Naive thymus-derived CD4-positive, alpha-beta T cell (primary cell): ENCODE measurements at regions of chr17 and their contacts with region 1.

Region 1: DNA sequence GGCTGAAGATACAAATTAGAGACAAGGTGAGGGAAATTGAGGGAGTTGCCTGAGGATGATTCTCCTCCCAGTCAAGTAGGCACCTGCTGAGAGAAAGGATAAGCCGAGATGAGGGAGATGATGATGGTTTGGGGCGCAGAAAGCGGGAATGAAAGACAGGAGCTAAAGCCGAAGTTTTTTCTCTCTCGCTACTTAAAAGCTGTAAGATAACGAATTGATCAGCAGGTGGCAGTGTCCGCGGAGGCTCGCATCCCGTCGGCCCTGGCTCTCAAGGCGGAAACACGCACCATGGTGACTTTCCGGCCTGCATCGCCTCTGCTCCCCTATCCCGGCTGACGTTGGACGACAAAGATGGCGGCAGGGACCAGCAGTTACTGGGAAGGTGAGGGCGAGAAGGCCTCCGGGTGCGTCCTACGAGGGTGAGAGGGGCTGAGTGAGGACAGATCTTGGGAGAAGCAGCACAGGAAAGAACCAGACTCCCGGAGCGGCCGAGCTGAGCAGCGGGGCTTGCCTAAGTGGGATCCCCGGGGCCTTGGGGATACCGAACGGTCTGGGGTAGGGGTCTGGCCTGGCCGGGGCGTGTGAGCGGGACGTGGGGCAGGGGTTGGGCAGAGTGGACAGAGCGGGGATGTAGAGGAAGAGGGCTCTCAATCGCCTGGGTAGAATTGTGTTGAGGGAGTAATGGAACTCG is at the start of gene GOSR1:
- DNase-seq: peak; percentile 78 to 92 (median 90)
- ATAC-seq: peak; percentile 99
- H3K4me3 ChIP-seq: peak within 1 kb of the TSS; percentile 82
- H3K4me3 Mint-ChIP-seq: peak within 1 kb of the TSS; percentile 92 to 99 (median 97)
- H3K27ac ChIP-seq: peak within 1 kb of the TSS; percentile 100
- H3K27ac Mint-ChIP-seq: peak within 1 kb of the TSS; percentile 94 to 99 (median 99)
- H3K4me1 ChIP-seq: peaks cover 11 to 13% of the 10 kb centered on the region in 2 donors
- H3K4me1 Mint-ChIP-seq: peaks cover 18 to 59% (median 47%) of the 10 kb centered on the region in 7 donors
- H3K27me3 ChIP-seq: no peaks in the 10 kb centered on the region
- H3K27me3 Mint-ChIP-seq: peaks cover 0 to 7% (median 2%) of the 10 kb centered on the region in 5 donors
- total RNA-seq, gene GOSR1: 45.1 to 70.8 (median 62.9) TPM

Region 2: GRCh38 chr17:30291543-30292285 is 185.5 kb before region 1 on chr17 and contains the start of gene BLMH:
- CTCF ChIA-PET with region 1: no interaction called
- POLR2A ChIA-PET with region 1: no interaction called
- intact Hi-C with region 1: loop called in 1 of 2 experiments (anchors 10 kb)
- DNase-seq: peak; percentile 58 to 89 (median 66)
- ATAC-seq: peak; percentile 90
- H3K4me3 ChIP-seq: peak within 1 kb of the TSS; percentile 77
- H3K4me3 Mint-ChIP-seq: peak within 1 kb of the TSS in 8 of 10 donors; percentile 92 to 97 (median 94)
- H3K27ac ChIP-seq: peak within 1 kb of the TSS; percentile 63
- H3K27ac Mint-ChIP-seq: peak within 1 kb of the TSS; percentile 44 to 91 (median 85)
- H3K4me1 ChIP-seq: peaks cover 9% of the 10 kb centered on the region in 2 donors
- H3K4me1 Mint-ChIP-seq: peaks cover 5 to 22% (median 19%) of the 10 kb centered on the region in 7 donors
- H3K27me3 ChIP-seq: no peaks in the 10 kb centered on the region
- H3K27me3 Mint-ChIP-seq: no peaks in the 10 kb centered on the region
- total RNA-seq, gene BLMH: 26.8 to 57.5 (median 40.1) TPM

Region 3: DNA sequence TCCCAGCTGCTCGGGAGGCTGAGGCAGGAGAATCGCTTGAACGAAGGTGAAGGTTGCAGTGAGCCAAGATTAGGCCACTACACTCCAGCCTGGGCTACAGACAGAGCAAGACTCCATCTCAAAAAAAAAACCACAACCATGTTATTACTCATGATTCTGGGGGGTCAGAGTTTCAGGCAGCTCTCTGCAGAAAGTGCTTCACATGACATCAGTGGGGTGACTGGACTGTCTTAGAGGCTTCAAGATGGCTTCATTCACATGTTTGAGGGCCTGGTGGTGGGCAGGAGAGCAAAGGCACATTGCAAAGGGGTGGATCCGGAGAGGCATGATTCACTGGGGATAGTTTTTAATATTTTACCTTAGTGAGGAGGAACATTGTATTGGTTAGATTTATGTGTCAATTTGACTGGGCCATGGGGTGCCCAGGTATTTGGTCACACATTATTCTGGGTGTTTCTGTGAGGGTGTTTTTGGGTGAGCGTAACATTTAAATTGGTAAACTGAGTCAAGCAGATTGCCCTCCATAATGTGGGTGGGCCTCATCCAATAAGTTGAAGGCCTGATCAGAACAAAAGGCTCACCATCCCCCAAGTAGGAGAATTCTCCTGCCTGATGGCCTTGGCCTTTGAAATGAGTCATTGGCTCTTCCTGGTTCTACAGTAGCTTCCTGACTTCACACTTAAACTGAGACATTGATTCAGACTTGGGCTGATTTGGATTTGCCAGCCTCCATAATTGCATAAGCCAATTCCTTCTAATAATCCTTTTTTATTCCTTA is 109.8 kb after region 1 on chr17:
- CTCF ChIA-PET with region 1: no interaction called
- POLR2A ChIA-PET with region 1: no interaction called
- intact Hi-C with region 1: no loop called
- DNase-seq: no peak
- ATAC-seq: no peak
- H3K4me3 ChIP-seq: no peak overlapping the region
- H3K4me3 Mint-ChIP-seq: no peak overlapping the region
- H3K27ac ChIP-seq: no peak overlapping the region
- H3K27ac Mint-ChIP-seq: no peak overlapping the region
- H3K4me1 ChIP-seq: no peaks in the 10 kb centered on the region
- H3K4me1 Mint-ChIP-seq: peaks cover 0 to 6% (median 0%) of the 10 kb centered on the region in 7 donors
- H3K27me3 ChIP-seq: no peaks in the 10 kb centered on the region
- H3K27me3 Mint-ChIP-seq: peaks cover 0 to 8% (median 2%) of the 10 kb centered on the region in 5 donors

Region 4: GRCh38 chr17:30600049-30600829 is 123.0 kb after region 1 on chr17:
- CTCF ChIA-PET with region 1: no interaction called
- POLR2A ChIA-PET with region 1: no interaction called
- intact Hi-C with region 1: loop called (anchors 5 to 10 kb)
- DNase-seq: peak; percentile 20 to 76 (median 47)
- ATAC-seq: peak; percentile 91
- H3K4me3 ChIP-seq: peak overlapping the region; percentile 79
- H3K4me3 Mint-ChIP-seq: peak overlapping the region; percentile 81 to 97 (median 92)
- H3K27ac ChIP-seq: peak overlapping the region; percentile 61
- H3K27ac Mint-ChIP-seq: peak overlapping the region in 8 of 9 donors; percentile 14 to 91 (median 75)
- H3K4me1 ChIP-seq: peaks cover 0 to 2% of the 10 kb centered on the region in 2 donors
- H3K4me1 Mint-ChIP-seq: peaks cover 5 to 25% (median 22%) of the 10 kb centered on the region in 7 donors
- H3K27me3 ChIP-seq: no peaks in the 10 kb centered on the region
- H3K27me3 Mint-ChIP-seq: peaks cover 0 to 18% (median 0%) of the 10 kb centered on the region in 5 donors

Region 5: DNA sequence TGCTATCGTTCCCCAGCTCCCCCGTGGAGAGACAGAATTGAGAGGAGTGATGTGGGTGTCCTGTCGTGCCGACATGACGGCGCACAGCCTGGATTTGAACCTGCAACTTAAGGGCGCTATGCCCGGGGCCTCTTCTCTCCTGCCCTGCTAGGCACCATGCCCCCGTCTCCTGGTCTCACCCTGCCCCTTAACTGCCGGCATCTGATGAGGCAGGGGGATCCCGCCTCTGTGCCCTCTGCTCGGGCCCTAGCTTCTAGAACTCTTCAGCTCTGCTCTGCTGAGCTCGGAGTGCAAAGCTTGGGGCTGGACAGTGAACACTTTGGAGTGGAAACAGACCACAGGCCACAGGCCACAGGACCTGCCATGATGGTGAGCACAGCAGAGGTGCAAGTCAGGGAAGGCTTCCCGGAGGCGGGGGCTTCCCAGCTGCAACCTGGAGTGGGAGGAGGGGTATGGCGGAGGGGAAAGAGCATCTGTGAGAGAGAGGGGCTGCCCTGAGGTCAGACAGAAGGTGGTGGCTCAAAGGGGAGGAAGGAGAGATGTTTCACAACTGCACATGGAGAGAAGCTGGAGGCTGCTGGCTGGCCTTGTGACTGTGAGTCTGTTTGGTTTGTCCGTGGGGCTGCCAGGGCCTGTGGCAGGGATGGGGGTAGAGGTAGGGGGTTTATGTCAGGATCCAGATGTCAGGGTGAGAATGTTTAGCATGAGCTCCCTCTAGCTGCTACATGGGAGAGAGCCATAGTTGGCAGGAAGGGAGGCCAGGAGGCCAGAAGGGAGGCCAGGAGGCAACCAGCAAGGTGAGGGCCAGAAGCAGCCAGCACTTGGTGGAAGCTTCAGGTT is 239.5 kb after region 1 on chr17:
- CTCF ChIA-PET with region 1: no interaction called
- POLR2A ChIA-PET with region 1: no interaction called
- intact Hi-C with region 1: loop called in 1 of 2 experiments (anchors 5 kb)
- DNase-seq: no peak
- ATAC-seq: no peak
- H3K4me3 ChIP-seq: no peak overlapping the region
- H3K4me3 Mint-ChIP-seq: no peak overlapping the region
- H3K27ac ChIP-seq: no peak overlapping the region
- H3K27ac Mint-ChIP-seq: no peak overlapping the region
- H3K4me1 ChIP-seq: peaks cover 0 to 3% of the 10 kb centered on the region in 2 donors
- H3K4me1 Mint-ChIP-seq: peaks cover 5 to 12% (median 9%) of the 10 kb centered on the region in 7 donors
- H3K27me3 ChIP-seq: no peaks in the 10 kb centered on the region
- H3K27me3 Mint-ChIP-seq: peaks cover 0 to 2% (median 0%) of the 10 kb centered on the region in 5 donors

Region 6: DNA sequence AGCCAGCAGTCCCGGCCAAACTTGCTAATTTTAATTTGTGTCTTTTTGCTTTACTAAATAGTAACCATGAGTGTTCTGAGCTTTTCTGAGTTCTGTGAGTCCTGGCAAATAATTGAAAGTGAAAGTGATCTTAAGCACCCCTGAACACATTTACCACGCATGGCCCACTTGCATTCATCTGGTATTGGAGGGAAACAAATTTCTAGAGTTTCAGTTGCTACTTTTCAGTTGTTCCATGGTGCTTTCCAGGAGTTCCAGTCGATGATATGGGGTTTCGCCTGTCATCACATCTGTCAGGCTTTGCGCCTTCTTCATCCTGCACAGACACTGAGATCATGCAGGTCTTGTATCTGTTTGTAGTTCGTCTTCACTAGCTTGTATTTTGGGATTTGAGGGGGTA is 303.1 kb after region 1 on chr17:
- CTCF ChIA-PET with region 1: no interaction called
- POLR2A ChIA-PET with region 1: no interaction called
- intact Hi-C with region 1: no loop called
- DNase-seq: no peak
- ATAC-seq: no peak
- H3K4me3 ChIP-seq: no peak overlapping the region
- H3K4me3 Mint-ChIP-seq: peak overlapping the region in 1 of 10 donors; percentile 20
- H3K27ac ChIP-seq: no peak overlapping the region
- H3K27ac Mint-ChIP-seq: peak overlapping the region; percentile 2 to 87 (median 61)
- H3K4me1 ChIP-seq: peaks cover 0 to 4% of the 10 kb centered on the region in 2 donors
- H3K4me1 Mint-ChIP-seq: peaks cover 0 to 14% (median 10%) of the 10 kb centered on the region in 7 donors
- H3K27me3 ChIP-seq: no peaks in the 10 kb centered on the region
- H3K27me3 Mint-ChIP-seq: no peaks in the 10 kb centered on the region

Region 7: DNA sequence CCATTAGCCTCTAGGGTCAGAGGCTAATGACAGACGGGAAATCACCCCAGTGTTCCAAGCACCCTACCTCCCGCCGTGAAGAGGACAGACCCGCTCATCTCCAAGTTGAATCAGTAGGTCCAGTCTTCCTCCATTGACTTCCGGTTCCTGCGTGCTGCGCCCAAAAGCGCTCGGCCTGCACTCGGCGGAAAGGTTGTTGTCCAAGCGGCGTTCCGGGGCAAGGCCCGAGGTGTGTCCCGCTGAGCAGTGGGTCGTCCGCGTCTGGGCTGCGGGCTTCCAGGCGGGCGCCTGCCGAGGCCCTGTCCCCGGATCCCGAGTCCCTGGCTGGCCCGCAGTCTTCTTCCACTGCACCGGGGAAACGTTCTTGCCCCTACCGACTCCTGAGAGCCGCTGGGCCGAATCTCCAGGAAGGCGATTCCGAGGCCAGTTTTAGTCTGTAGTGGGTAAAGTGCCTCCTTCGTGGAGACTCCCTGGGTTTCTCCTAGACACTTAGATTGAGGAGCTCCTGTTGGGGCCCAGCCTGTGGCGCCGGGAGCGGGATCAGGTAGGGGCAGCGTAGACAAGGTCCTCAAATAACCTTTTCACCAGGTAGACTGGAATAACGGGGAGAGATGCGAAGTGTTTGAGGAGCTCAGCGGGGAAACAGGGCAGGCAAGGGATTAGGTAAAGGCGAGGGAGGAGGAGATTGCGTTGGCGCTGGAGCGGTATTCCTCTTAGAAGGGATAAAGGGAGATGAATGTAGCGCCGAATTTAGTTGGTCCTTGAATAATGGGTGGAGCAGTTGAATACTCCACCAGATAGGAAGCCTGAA is 429.1 kb after region 1 on chr17 and contains the start of gene TEFM:
- CTCF ChIA-PET with region 1: no interaction called
- POLR2A ChIA-PET with region 1: no interaction called
- intact Hi-C with region 1: loop called in 1 of 2 experiments (anchors 1 kb)
- DNase-seq: peak; percentile 71 to 86 (median 80)
- ATAC-seq: peak; percentile 98
- H3K4me3 ChIP-seq: peak within 1 kb of the TSS; percentile 96
- H3K4me3 Mint-ChIP-seq: peak within 1 kb of the TSS; percentile 88 to 99 (median 92)
- H3K27ac ChIP-seq: peak within 1 kb of the TSS; percentile 88
- H3K27ac Mint-ChIP-seq: peak within 1 kb of the TSS; percentile 77 to 99 (median 92)
- H3K4me1 ChIP-seq: peaks cover 9 to 13% of the 10 kb centered on the region in 2 donors
- H3K4me1 Mint-ChIP-seq: peaks cover 33 to 65% (median 56%) of the 10 kb centered on the region in 7 donors
- H3K27me3 ChIP-seq: no peaks in the 10 kb centered on the region
- H3K27me3 Mint-ChIP-seq: no peaks in the 10 kb centered on the region
- total RNA-seq, gene TEFM: 8.5 to 22.1 (median 16.5) TPM

Region 8: GRCh38 chr17:31216053-31216751 is 739.0 kb after region 1 on chr17:
- CTCF ChIA-PET with region 1: no interaction called
- POLR2A ChIA-PET with region 1: no interaction called
- intact Hi-C with region 1: loop called in 1 of 2 experiments (anchors 2 kb)
- DNase-seq: peak in 5 of 9 donors; percentile 28 to 40 (median 32)
- ATAC-seq: no peak
- H3K4me3 ChIP-seq: no peak overlapping the region
- H3K4me3 Mint-ChIP-seq: no peak overlapping the region
- H3K27ac ChIP-seq: no peak overlapping the region
- H3K27ac Mint-ChIP-seq: no peak overlapping the region
- H3K4me1 ChIP-seq: no peaks in the 10 kb centered on the region
- H3K4me1 Mint-ChIP-seq: peaks cover 0 to 4% (median 0%) of the 10 kb centered on the region in 7 donors
- H3K27me3 ChIP-seq: no peaks in the 10 kb centered on the region
- H3K27me3 Mint-ChIP-seq: no peaks in the 10 kb centered on the region